ENCODE measurements at regions of chr4 and their contacts with region 1.

Region 1: DNA sequence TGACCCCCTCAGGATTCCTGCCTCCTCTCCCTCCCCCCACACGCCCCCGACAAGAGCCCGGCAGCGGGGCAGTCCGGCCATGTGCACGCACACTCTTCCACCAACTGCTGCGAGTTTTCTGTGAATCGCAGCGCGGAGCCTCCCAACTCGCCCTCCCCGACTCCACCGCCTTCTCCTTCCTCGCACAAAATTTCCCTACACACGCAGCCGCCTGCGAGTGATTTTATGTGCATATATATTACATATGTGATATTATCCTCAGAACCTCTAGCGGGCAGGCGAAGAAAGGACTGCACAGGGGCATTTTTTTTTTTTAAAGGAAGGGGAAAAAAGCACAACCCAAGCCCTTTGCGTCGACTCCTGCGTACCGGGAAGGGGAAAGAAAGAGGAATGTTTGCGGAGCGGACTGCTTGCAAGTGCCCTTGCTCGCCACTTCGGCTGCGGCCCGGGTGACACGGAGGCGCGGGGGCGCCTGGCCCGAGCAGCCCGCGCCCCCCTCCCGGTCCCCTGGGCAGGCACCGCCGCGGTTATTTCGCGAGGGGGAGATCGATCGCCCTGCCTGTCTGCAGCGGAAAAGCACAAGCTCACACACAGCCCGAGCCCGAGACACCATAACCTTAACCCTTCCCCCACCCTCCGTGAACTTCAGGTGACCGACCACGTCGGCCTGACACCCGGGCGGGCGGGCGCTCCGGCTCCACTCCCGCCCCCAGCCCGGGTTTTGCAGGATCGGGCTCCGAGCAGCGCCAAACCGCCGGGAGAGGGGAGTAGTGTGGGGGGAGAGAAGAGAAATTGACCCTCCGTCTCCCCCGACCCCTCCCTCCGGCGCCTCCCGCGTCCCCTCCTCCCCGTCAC is 2.3 kb downstream of the ZNF827 start:
- DNase-seq: peak; percentile 72 to 81
- ATAC-seq: peak; percentile 74 to 77 (median 76)
- H3K4me3 ChIP-seq: peak overlapping the region; percentile 80
- H3K27ac ChIP-seq: peak overlapping the region; percentile 85
- H3K4me1 ChIP-seq: peaks cover 25% of the 10 kb centered on the region
- H3K27me3 ChIP-seq: no peaks in the 10 kb centered on the region
- CTCF ChIP-seq: peak; percentile 28

Region 2: GRCh38 chr4:144985531-144985930 is 950.8 kb before region 1 on chr4:
- intact Hi-C with region 1: no loop called
- DNase-seq: no peak
- ATAC-seq: no peak
- H3K4me3 ChIP-seq: no peak overlapping the region
- H3K27ac ChIP-seq: no peak overlapping the region
- H3K4me1 ChIP-seq: no peaks in the 10 kb centered on the region
- H3K27me3 ChIP-seq: no peaks in the 10 kb centered on the region
- CTCF ChIP-seq: no peak

Region 3: DNA sequence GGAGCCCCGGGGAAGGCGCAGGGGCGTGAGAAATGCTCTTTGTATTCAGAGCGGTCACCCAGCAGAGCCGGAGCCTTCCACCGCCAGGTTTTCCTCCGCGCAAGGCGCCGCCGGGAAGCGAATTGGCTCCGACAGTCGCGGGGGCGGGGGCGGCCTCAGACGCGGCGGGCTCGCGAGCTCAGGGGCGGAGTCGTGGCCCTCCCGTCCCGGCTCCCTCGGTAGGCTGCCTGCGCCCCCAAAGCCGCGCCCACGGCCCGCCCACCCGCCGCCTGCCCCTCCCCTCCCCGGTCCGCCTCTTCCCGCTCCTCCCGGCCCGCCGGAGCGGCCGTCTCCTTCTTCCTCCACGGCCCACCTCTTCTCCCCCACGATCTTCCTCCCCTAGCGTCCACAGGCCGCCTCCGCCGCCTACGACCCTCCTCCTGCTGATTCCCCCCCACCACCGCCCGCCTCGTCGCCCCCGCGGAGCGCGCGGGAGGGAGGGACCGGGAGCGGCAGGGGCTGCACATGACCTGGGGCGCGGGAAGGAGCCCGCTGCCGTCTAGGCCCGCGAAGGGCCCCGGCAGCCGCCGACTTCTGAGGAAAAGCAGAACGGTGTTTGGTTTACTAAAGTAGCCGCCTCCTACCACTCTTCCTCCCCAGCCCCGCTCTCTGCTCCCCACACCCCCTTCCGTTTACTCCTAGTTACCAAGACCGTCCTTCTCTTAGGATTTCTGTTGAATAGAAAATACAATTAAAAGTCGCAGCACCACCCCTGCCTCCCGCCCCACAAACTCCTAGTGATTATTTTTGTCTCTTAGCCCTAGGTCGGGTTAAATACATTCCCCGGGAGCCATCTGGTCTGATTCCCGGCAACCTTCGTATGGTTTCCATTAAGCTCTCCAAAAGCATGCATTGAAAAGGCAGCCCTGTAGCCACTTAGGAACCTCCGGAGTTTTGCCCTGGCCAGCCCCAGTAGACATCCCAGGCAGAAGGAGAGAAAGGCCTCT is 203.2 kb before region 1 on chr4:
- intact Hi-C with region 1: loop called (anchors 2 to 10 kb)
- DNase-seq: peak; percentile 97
- ATAC-seq: peak; percentile 66 to 78 (median 69)
- H3K4me3 ChIP-seq: peak overlapping the region; percentile 68
- H3K27ac ChIP-seq: peak overlapping the region; percentile 98
- H3K4me1 ChIP-seq: peaks cover 40% of the 10 kb centered on the region
- H3K27me3 ChIP-seq: no peaks in the 10 kb centered on the region
- CTCF ChIP-seq: peak; percentile 11

Region 4: GRCh38 chr4:145829629-145830395 is 106.6 kb before region 1 on chr4:
- intact Hi-C with region 1: loop called in 1 of 2 experiments (anchors 5 kb)
- DNase-seq: no peak
- ATAC-seq: no peak
- H3K4me3 ChIP-seq: no peak overlapping the region
- H3K27ac ChIP-seq: no peak overlapping the region
- H3K4me1 ChIP-seq: peaks cover 5% of the 10 kb centered on the region
- H3K27me3 ChIP-seq: no peaks in the 10 kb centered on the region
- CTCF ChIP-seq: no peak

Region 5: DNA sequence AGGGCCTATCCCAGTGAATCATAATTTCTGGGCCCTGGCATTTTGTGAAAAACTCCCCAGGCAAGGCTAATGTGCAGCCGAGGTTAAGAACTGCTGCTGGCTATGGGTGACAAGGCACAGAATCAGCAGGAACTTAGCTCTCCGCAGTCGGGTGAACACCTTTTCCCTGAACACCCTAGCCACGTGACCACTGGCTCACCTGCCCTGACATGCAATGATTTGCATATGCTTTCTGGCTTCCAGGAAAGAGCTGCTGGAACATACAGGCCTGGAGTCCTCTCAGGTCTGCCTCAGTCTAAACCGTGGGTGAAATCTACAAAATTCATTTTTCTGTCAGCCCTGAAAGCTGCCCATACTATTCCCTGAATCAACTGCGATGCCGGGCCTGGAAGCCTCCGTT is 54.4 kb before region 1 on chr4:
- intact Hi-C with region 1: loop called (anchors 5 to 10 kb)
- DNase-seq: no peak
- ATAC-seq: peak in 2 of 4 donors; percentile 3 to 42
- H3K4me3 ChIP-seq: no peak overlapping the region
- H3K27ac ChIP-seq: peak overlapping the region; percentile 47
- H3K4me1 ChIP-seq: peaks cover 57% of the 10 kb centered on the region
- H3K27me3 ChIP-seq: no peaks in the 10 kb centered on the region
- CTCF ChIP-seq: no peak

Region 6: GRCh38 chr4:145887241-145887991 is 49.0 kb before region 1 on chr4:
- intact Hi-C with region 1: loop called (anchors 5 to 10 kb)
- DNase-seq: peak in 1 of 2 donors; percentile 33
- ATAC-seq: peak; percentile 56 to 74 (median 60)
- H3K4me3 ChIP-seq: no peak overlapping the region
- H3K27ac ChIP-seq: peak overlapping the region; percentile 57
- H3K4me1 ChIP-seq: peaks cover 28% of the 10 kb centered on the region
- H3K27me3 ChIP-seq: no peaks in the 10 kb centered on the region
- CTCF ChIP-seq: no peak

Region 7: GRCh38 chr4:145957302-145957701 is 20.9 kb after region 1 on chr4:
- intact Hi-C with region 1: no loop called
- DNase-seq: no peak
- ATAC-seq: no peak
- H3K4me3 ChIP-seq: no peak overlapping the region
- H3K27ac ChIP-seq: no peak overlapping the region
- H3K4me1 ChIP-seq: no peaks in the 10 kb centered on the region
- H3K27me3 ChIP-seq: no peaks in the 10 kb centered on the region
- CTCF ChIP-seq: no peak

Region 8: GRCh38 chr4:146073517-146073916 is 137.1 kb after region 1 on chr4:
- intact Hi-C with region 1: no loop called
- DNase-seq: no peak
- ATAC-seq: no peak
- H3K4me3 ChIP-seq: no peak overlapping the region
- H3K27ac ChIP-seq: no peak overlapping the region
- H3K4me1 ChIP-seq: no peaks in the 10 kb centered on the region
- H3K27me3 ChIP-seq: no peaks in the 10 kb centered on the region
- CTCF ChIP-seq: no peak

Region 9: DNA sequence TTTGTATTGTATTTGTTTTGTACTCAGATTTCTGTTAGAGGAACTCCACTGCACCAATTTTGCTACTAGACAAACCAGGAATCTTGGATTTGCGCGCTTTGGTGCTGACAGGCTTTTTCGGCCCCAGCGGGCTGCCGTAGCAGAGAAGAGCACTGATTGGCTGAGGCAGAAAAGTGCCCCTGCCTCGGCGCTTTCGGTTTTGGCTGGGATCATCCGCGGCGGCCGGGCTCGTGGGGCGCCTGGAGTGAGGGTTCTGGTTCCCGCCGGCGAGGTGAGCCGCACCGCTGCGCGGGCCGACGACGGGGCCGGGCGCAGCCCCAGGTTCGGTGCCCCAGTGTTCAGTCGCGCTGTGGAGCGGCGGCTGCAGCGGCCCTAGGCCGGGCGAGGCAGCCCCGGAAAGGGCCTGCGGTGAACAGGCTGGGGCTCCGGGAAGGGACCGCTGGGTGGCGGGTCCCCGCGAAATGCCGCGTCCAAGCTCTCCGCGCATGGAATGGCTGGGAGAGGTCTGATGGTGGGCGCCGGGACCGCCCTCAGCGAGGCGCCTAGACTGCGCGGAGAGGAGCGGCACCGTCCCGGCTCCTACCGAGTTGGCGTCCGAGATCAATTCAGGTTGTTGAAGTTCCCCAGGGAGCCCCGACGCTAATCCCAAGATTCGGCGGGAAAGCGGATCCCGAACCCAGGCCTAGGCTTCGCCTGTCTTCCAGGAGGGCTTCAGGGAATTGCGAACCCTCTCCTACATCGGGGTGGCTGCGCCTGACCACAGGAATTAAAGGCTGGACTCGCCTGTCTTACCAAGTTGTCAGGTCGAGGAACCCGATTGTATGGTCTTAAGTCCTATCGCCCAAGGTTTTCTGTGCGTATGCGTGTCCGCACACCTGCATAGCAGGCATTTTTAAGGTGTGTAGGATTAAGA is 239.4 kb after region 1 on chr4 and contains the start of gene LSM6:
- intact Hi-C with region 1: loop called (anchors 5 to 10 kb)
- DNase-seq: peak; percentile 89 to 90
- ATAC-seq: peak; percentile 95 to 98 (median 96)
- H3K4me3 ChIP-seq: peak within 1 kb of the TSS; percentile 88
- H3K27ac ChIP-seq: peak within 1 kb of the TSS; percentile 93
- H3K4me1 ChIP-seq: peaks cover 39% of the 10 kb centered on the region
- H3K27me3 ChIP-seq: no peaks in the 10 kb centered on the region
- CTCF ChIP-seq: peak; percentile 16
- total RNA-seq, gene LSM6: 9.4 to 15.2 (median 14.6) TPM

Region 10: DNA sequence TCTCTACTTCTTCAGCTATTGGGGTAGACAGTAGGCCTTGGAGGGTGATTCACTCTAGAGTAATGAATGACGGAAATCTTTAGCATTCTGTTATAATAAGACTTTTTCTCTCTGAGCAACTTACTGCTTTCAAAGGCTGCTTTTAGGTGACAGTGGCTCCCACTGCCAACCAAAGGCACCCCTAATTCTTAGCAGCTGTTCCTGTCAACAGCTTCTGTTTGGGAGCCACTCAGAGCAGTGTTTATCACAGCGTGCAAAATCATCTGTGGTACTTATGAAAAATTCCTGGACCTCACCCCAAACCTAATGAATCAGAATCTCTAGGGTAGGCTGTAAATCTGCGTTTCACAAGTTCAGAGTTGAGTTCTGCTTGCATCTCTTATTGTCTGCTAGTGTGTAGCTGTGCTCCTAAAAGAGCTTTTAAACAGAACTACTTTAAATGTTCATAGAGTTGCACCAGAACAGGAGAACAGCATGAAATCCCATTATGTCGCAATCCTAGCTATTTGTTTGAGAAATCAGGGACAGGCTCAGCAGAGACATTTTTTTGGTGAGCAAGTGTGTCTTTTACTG is 649.5 kb after region 1 on chr4:
- intact Hi-C with region 1: no loop called
- DNase-seq: no peak
- ATAC-seq: peak in 3 of 4 donors; percentile 21 to 73 (median 69)
- H3K4me3 ChIP-seq: no peak overlapping the region
- H3K27ac ChIP-seq: no peak overlapping the region
- H3K4me1 ChIP-seq: no peaks in the 10 kb centered on the region
- H3K27me3 ChIP-seq: no peaks in the 10 kb centered on the region
- CTCF ChIP-seq: no peak

Measured in psoas muscle (tissue), 8 donors.